ENCODE measurements at regions of chr12 and their contacts with region 1.

Region 1: GRCh38 chr12:53766881-53767280 is 15.1 kb upstream of the CISTR start:
- DNase-seq: no peak
- H3K4me3 Mint-ChIP-seq: no peak overlapping the region
- H3K27ac Mint-ChIP-seq: no peak overlapping the region
- H3K4me1 Mint-ChIP-seq: peaks cover 30% of the 10 kb centered on the region
- H3K27me3 Mint-ChIP-seq: peaks cover 59% of the 10 kb centered on the region
- CTCF ChIP-seq: no peak

Region 2: DNA sequence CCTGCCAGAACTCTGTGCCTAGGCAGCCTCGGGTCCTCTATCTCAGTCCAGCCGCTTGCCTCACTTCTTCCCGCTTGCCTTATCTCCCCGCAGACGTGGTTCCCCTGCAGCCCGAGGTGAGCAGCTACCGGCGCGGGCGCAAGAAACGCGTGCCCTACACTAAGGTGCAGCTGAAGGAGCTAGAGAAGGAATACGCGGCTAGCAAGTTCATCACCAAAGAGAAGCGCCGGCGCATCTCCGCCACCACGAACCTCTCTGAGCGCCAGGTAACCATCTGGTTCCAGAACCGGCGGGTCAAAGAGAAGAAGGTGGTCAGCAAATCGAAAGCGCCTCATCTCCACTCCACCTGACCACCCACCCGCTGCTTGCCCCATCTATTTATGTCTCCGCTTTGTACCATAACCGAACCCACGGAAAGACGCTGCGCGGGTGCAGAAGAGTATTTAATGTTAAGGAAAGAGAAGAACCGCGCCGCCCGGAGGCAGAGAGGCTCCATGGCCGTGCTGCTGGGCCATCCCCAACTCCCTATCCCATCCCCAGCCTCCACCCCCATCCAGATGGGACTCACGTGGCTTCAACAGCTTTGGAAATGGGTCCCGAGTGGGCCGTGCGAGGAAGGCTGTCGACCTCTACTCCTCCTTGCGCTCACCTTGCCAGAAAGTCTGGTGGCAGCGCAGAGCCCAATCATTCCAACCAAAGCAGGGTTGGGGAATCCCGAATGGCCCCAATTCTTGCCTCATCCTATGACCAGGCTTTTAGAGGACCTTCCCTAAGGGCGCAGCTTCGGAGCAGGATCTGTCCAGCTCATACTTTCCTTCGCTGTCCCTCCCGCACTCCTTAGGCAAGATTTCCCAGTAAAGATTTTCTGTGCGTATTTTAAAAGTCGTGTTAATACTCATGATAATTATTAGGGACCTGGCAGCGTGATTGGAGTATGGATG is 178.3 kb after region 1 on chr12:
- CTCF ChIA-PET with region 1: interaction called, 6 read pairs
- intact Hi-C with region 1: loop called (anchors 2 kb)
- DNase-seq: no peak
- H3K4me3 Mint-ChIP-seq: no peak overlapping the region
- H3K27ac Mint-ChIP-seq: no peak overlapping the region
- H3K4me1 Mint-ChIP-seq: no peaks in the 10 kb centered on the region
- H3K27me3 Mint-ChIP-seq: peaks cover 100% of the 10 kb centered on the region
- CTCF ChIP-seq: no peak

Region 3: DNA sequence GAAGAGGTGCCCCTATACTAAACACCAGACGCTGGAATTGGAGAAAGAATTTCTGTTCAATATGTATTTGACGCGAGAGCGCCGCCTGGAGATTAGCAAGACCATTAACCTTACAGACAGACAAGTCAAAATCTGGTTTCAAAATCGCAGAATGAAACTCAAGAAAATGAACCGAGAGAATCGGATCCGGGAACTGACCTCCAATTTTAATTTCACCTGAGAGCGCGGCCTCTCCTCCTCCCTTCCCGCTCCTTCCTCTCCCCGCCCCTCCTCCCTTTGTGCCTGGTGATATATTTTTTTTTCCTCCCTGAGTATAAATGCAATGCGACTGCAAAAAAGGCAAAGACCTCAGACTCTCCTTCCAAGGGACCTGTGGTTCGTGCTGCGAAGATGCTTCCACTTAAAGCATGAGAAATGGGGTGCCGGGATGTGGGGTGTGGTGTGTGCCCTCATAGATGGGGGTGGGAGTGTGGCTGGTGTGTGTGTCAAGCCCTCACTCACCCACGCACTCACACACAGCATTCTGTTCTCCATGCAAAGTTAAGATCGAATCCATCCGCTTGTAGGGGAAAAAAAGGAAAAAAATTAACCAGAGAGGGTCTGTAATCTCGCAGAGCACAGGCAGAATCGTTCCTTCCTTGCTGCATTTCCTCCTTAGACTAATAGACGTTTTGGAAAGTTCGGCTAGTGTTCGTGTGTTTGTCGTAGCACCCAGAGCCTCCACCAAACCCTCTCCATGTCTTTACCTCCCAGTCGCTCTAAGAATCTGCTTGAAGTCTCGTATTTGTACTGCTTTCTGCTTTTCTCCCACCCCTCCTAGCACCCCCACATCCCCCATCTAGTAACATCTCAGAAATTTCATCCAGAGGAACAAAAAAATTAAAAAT is 222.6 kb after region 1 on chr12:
- CTCF ChIA-PET with region 1: interaction called, 9 read pairs
- intact Hi-C with region 1: loop called (anchors 1 kb)
- DNase-seq: peak; percentile 55
- H3K4me3 Mint-ChIP-seq: peak overlapping the region; percentile 10
- H3K27ac Mint-ChIP-seq: no peak overlapping the region
- H3K4me1 Mint-ChIP-seq: peaks cover 32% of the 10 kb centered on the region
- H3K27me3 Mint-ChIP-seq: peaks cover 100% of the 10 kb centered on the region
- CTCF ChIP-seq: peak; percentile 70

Region 4: GRCh38 chr12:54017878-54018467 is 251.1 kb after region 1 on chr12:
- CTCF ChIA-PET with region 1: no interaction called
- intact Hi-C with region 1: no loop called
- DNase-seq: peak; percentile 81
- H3K4me3 Mint-ChIP-seq: peak overlapping the region; percentile 77
- H3K27ac Mint-ChIP-seq: no peak overlapping the region
- H3K4me1 Mint-ChIP-seq: no peaks in the 10 kb centered on the region
- H3K27me3 Mint-ChIP-seq: peaks cover 80% of the 10 kb centered on the region
- CTCF ChIP-seq: no peak